Mammary epithelial cell (primary cell): ENCODE measurements at regions of chr19 and their contacts with region 1.

Region 1: GRCh38 chr19:48842789-48843162 is 6.5 kb upstream of the HSD17B14 start:
- DNase-seq: no peak
- H3K4me3 ChIP-seq: no peak overlapping the region
- H3K27ac ChIP-seq: no peak overlapping the region
- H3K4me1 ChIP-seq: no peaks in the 10 kb centered on the region
- H3K27me3 ChIP-seq: no peaks in the 10 kb centered on the region
- CTCF ChIP-seq: peak; percentile 68 to 81

Region 2: DNA sequence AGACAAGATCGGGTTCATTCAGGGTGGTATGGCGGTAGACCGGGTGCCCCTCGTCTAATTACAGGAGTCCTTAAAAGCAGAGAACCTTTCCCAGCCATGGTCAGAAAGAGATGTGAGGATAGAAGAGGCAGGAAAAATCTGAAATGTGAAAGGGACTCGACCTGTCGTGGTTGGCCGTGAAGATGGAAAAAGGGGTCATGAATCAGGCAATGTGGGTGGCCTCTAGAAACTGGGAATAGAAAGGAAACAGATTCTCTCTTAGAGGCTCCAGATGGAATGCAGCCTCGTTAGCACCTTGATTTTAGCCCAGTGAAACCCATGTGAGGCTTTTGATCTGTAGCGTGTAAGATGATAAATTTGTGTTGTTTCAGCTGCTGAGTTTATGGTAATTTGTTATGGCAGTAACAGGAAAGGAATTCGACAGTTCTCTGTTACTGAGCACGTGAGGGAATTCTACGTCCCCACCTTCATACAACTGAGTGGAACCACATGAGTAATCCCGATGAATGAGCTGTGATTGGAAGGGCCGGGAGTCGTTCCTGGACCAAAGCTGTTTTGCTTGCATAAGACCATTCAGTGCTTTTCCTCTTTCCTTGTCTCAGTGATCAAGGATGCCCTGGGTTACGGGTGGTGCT is 185.8 kb before region 1 on chr19:
- CTCF ChIA-PET with region 1: no interaction called
- dilution Hi-C with region 1: no loop called
- in situ Hi-C with region 1: loop called in 1 of 2 experiments (anchors 10 kb)
- intact Hi-C with region 1: no loop called
- DNase-seq: peak; percentile 63
- H3K4me3 ChIP-seq: no peak overlapping the region
- H3K27ac ChIP-seq: no peak overlapping the region
- H3K4me1 ChIP-seq: no peaks in the 10 kb centered on the region
- H3K27me3 ChIP-seq: no peaks in the 10 kb centered on the region
- CTCF ChIP-seq: no peak

Region 3: DNA sequence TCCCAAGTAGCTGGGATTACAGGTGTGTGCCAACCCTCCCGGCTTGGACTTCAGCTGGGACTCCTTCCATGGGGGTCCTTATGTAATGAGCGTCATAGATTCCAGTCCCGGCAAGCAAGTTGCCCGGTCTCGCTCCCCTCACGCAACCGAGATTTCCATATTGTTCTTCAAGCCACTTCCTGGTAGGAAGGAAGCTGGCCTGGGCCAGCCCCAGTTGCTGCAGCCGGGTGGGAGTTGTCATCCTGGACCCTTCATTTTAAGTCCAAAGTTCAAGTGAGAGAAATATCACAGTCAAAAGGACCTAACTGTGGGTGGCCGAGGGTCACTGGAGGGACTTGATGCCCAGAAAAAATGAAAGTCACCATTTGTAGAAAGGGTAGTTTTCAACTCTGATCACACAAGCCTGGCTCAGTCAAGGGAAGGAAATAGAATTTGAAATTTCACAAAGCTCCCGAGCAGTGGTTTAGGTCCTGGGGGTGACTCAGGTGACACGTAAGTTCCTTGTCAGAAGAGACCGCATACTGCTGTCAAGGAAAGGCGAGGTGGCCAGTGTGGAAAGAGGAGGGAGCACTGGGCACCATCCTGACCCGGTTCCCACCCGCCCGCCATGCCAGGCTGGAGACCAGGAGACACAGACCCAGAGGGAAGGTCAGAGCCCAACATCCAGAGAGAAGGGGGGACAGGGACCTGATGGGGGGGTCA is 82.1 kb before region 1 on chr19:
- CTCF ChIA-PET with region 1: no interaction called
- dilution Hi-C with region 1: loop called (anchors 5 kb)
- in situ Hi-C with region 1: no loop called
- intact Hi-C with region 1: no loop called
- DNase-seq: no peak
- H3K4me3 ChIP-seq: no peak overlapping the region
- H3K27ac ChIP-seq: no peak overlapping the region
- H3K4me1 ChIP-seq: no peaks in the 10 kb centered on the region
- H3K27me3 ChIP-seq: peaks cover 2% of the 10 kb centered on the region
- CTCF ChIP-seq: no peak

Region 4: GRCh38 chr19:48872182-48872883 is 29.6 kb after region 1 on chr19 and contains the start of gene PPP1R15A:
- CTCF ChIA-PET with region 1: interaction called, 17 read pairs
- dilution Hi-C with region 1: no loop called
- in situ Hi-C with region 1: no loop called
- intact Hi-C with region 1: no loop called
- DNase-seq: peak; percentile 98
- H3K4me3 ChIP-seq: peak within 1 kb of the TSS; percentile 67 to 93 (median 89)
- H3K27ac ChIP-seq: peak within 1 kb of the TSS; percentile 99
- H3K4me1 ChIP-seq: peaks cover 33% of the 10 kb centered on the region
- H3K27me3 ChIP-seq: no peaks in the 10 kb centered on the region
- CTCF ChIP-seq: no peak
- total RNA-seq, gene PPP1R15A: 28.8 to 200 TPM

Region 5: DNA sequence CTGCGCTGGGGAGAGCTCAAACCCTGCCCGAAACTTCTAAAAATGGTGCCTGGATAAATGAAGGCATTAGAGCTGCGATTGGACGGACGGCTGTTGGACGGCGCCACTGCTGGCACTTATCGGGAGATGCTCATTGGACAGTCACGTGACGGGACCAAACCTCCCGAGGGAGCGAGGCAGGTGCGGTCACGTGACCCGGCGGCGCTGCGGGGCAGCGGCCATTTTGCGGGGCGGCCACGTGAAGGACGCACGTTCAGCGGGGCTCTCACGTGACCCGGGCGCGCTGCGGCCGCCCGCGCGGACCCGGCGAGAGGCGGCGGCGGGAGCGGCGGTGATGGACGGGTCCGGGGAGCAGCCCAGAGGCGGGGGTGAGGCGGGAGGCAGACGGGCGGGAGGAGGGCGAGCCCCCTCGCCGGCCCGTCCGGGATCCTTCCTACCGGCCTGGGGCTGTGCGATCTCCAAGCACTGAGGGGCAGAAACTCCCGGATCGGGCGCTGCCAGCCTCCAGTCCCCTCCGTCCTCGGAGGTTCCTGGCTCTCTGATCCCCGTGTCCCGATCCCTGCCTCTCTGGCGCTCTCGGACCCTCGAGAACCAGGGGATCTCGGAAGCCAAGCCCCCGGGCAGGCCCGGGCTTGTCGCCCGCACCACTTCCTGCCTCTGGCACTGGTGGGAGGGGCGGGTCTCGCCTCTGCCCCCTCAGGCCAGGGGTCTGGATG is 112.0 kb after region 1 on chr19 and contains the start of gene BAX:
- CTCF ChIA-PET with region 1: interaction called, 24 read pairs
- dilution Hi-C with region 1: no loop called
- in situ Hi-C with region 1: no loop called
- intact Hi-C with region 1: no loop called
- DNase-seq: peak; percentile 94
- H3K4me3 ChIP-seq: peak within 1 kb of the TSS; percentile 57 to 91 (median 70)
- H3K27ac ChIP-seq: peak within 1 kb of the TSS; percentile 63
- H3K4me1 ChIP-seq: peaks cover 14% of the 10 kb centered on the region
- H3K27me3 ChIP-seq: no peaks in the 10 kb centered on the region
- CTCF ChIP-seq: no peak
- total RNA-seq, gene BAX: 53.7 to 180 TPM